ENCODE measurements at regions of chr15 and their contacts with region 1.

Region 1: GRCh38 chr15:27059610-27060202 is 88.7 kb downstream of the GABRG3 start:
- DNase-seq: peak in 1 of 10 donors; percentile 48
- H3K4me3 ChIP-seq: no peak overlapping the region
- H3K27ac ChIP-seq: no peak overlapping the region
- H3K27me3 ChIP-seq: peaks cover 0 to 3% (median 0%) of the 10 kb centered on the region in 45 donors
- CTCF ChIP-seq: peak; percentile 42 to 80 (median 71)

Region 2: GRCh38 chr15:26974120-26974780 is 85.5 kb before region 1 on chr15:
- intact Hi-C with region 1: loop called in 1 of 2 experiments (anchors 10 kb)
- DNase-seq: no peak
- H3K4me3 ChIP-seq: peak overlapping the region in 31 of 59 donors; percentile 6 to 67 (median 29)
- H3K27ac ChIP-seq: peak overlapping the region in 11 of 59 donors; percentile 18 to 90 (median 35)
- H3K27me3 ChIP-seq: peaks cover 0 to 34% (median 8%) of the 10 kb centered on the region in 45 donors
- CTCF ChIP-seq: peak in 53 of 56 donors; percentile 22 to 57 (median 43)

Region 3: DNA sequence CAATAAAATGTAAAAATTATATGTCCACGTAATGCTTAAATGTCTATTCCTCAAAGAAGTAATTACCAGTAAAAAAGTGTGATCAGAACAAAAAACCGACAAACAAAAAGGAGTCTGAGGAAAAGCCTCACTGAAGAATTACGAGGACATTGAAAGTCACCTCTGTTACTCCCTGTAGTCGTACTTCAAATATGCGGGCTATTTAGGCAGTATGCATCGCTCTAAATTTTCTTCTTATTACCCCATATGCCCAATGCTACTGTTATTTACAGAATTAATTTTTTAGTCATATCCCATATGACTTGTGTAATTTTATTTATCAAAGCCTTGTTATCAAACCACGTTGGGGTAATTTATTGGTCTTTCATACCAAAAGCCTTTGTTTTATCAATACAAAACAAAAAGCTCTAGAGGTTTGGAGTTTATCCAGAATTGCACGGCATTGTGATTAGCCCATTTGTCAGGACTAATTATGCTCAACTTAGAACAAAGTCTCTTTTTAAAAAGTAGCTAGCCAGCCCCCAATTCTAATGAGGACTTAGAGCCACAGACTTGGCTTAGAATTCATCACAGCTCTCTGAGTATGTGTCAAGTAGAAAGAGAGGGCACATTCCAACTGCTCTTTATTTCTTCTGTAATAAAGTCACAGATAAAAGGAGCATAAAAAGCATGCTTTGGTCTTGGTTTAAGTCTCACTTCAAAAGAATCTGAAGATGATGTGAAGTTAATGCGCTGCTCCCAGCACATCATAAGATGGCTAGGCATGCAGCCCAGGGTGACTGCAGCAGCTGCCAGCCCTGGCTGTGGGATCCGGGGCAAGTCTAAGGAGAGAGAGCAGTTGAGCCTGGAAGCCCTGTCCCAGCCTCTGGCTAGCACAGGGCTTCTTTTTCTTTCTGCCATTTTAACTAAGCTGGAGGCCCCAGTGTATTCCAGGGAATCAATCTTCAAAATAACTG is 432.2 kb after region 1 on chr15:
- intact Hi-C with region 1: loop called in 1 of 2 experiments (anchors 10 kb)
- DNase-seq: peak in 7 of 10 donors; percentile 12 to 74 (median 55)
- H3K4me3 ChIP-seq: peak overlapping the region in 17 of 59 donors; percentile 8 to 44 (median 17)
- H3K27ac ChIP-seq: peak overlapping the region in 54 of 59 donors; percentile 2 to 85 (median 64)
- H3K27me3 ChIP-seq: no peaks in the 10 kb centered on the region
- CTCF ChIP-seq: peak in 2 of 56 donors; percentile 6 to 21

Region 4: DNA sequence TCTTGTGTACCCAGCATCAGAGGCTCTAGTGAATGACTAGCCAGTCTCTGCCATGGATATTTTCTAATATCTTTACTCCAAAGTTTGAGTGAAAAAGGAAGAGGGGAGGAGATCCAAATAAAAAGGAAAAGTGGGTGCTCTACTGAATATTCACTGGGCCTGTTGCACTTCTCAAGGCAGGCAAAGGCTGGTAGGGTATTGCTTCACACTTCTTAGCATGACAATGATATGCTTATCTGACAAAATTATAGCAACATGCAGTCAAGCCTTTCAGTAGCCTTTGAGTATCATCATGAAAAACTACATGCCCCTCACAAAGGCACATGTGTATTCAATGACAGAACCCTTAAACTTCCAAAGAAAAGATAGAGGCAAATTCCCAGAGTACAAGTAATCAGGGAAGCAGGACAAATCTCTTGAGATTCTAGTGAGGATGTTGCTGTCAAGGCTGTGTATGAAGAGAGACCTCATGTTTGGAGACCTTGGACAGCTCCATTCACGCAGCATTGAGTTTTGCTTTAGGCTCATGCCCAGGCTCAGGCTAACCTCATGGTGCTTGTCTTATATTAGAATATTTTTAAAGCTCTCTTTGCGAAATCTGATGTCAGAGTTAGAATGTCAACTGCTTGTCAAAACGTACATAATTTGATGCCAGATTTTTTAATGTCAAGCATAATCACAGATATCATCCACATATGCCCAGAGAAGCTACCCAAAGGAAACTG is 532.5 kb after region 1 on chr15:
- intact Hi-C with region 1: no loop called
- DNase-seq: no peak
- H3K4me3 ChIP-seq: no peak overlapping the region
- H3K27ac ChIP-seq: no peak overlapping the region
- H3K27me3 ChIP-seq: peaks cover 0 to 7% (median 0%) of the 10 kb centered on the region in 45 donors
- CTCF ChIP-seq: no peak

Measured in dorsolateral prefrontal cortex (tissue), 120 donors.